ENCODE measurements at regions of chr9 and their contacts with region 1.

Region 1: DNA sequence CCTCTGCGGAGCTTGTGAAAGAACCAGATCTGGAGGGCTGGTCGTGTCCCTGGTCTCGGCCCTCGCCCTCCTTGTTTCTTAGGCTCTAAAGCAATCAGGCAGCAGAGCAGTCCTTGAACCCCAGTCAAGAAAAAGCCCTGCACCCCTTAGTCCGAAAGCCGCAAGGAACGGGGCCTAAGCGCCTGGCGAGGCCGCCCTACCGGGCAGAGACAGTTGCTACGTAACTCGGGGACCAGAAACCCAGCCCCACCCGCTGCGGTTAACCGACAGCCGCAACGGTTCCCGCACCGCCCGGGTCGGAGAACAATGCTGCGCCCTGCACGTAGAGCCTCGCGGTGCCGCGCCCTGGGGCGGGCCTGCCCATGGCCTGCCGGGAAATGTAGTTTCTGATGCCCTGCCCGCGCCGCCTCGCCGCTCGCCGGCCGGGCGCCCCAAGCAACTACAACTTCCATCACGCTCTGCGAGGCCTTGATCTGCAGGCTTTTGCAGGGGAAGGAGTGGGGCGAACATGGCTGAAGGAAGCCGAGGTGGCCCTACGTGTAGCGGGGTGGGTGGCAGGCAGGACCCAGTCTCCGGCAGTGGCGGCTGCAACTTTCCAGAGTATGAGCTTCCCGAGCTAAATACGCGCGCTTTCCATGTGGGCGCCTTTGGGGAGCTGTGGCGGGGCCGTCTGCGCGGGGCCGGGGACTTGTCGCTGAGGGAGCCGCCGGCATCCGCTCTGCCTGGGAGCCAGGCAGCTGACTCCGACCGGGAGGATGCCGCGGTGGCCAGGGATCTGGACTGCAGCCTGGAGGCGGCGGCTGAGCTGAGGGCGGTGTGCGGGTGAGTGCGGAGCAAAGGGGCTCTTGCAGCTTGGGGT is at the start of gene SNAPC3:
- DNase-seq: peak; percentile 94
- H3K4me3 Mint-ChIP-seq: peak within 1 kb of the TSS; percentile 89
- H3K27ac Mint-ChIP-seq: peak within 1 kb of the TSS; percentile 86
- H3K4me1 Mint-ChIP-seq: peaks cover 28% of the 10 kb centered on the region
- H3K27me3 Mint-ChIP-seq: no peaks in the 10 kb centered on the region
- total RNA-seq, gene SNAPC3: 30.6 to 32.8 TPM

Region 2: GRCh38 chr9:14993061-14993800 is 429.4 kb before region 1 on chr9:
- CTCF ChIA-PET with region 1: no interaction called
- intact Hi-C with region 1: loop called (anchors 2 kb)
- DNase-seq: peak; percentile 76
- H3K4me3 Mint-ChIP-seq: peak overlapping the region; percentile 76
- H3K27ac Mint-ChIP-seq: peak overlapping the region; percentile 74
- H3K4me1 Mint-ChIP-seq: peaks cover 30% of the 10 kb centered on the region
- H3K27me3 Mint-ChIP-seq: no peaks in the 10 kb centered on the region

Region 3: GRCh38 chr9:15231788-15232635 is 190.6 kb before region 1 on chr9:
- CTCF ChIA-PET with region 1: no interaction called
- intact Hi-C with region 1: loop called (anchors 1 kb)
- DNase-seq: peak; percentile 25
- H3K4me3 Mint-ChIP-seq: no peak overlapping the region
- H3K27ac Mint-ChIP-seq: no peak overlapping the region
- H3K4me1 Mint-ChIP-seq: peaks cover 47% of the 10 kb centered on the region
- H3K27me3 Mint-ChIP-seq: no peaks in the 10 kb centered on the region

Region 4: DNA sequence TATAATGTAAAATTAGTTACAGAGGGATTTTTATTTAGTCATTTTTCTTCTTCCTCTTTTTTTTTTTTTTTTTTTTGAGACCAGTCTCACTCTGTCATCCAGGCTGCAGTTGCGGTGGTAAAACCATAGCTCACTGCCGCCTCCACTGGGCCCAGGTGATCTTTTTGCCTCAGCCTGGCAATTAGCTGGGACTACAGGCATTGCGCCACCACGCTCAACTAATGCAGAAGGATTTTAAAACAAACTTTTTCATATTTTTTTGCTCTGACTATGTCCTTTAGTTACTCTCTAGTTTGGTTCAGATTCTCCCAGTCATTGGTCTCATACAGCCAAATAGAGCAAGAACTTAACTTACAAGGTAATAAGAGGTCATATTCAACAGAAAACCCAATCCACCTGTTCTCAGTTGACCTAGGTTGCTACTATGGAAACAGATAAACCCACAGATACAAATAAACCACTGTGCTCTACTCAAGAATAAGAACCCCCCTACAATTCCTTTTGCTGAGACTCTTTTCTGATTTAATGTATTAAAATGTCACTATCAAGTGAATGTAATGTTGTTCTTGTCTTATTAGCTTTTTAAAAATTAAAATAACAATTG is 65.4 kb before region 1 on chr9:
- CTCF ChIA-PET with region 1: interaction called, 4 read pairs
- intact Hi-C with region 1: loop called (anchors 1 kb)
- DNase-seq: peak; percentile 62
- H3K4me3 Mint-ChIP-seq: no peak overlapping the region
- H3K27ac Mint-ChIP-seq: no peak overlapping the region
- H3K4me1 Mint-ChIP-seq: peaks cover 9% of the 10 kb centered on the region
- H3K27me3 Mint-ChIP-seq: no peaks in the 10 kb centered on the region

Region 5: GRCh38 chr9:15510789-15511575 is 88.4 kb after region 1 on chr9 and contains the start of gene PSIP1:
- CTCF ChIA-PET with region 1: no interaction called
- intact Hi-C with region 1: loop called (anchors 1 kb)
- DNase-seq: peak; percentile 91
- H3K4me3 Mint-ChIP-seq: peak within 1 kb of the TSS; percentile 92
- H3K27ac Mint-ChIP-seq: peak within 1 kb of the TSS; percentile 98
- H3K4me1 Mint-ChIP-seq: peaks cover 51% of the 10 kb centered on the region
- H3K27me3 Mint-ChIP-seq: no peaks in the 10 kb centered on the region
- total RNA-seq, gene PSIP1: 161 to 164 TPM

Region 6: GRCh38 chr9:15606643-15607472 is 184.3 kb after region 1 on chr9:
- CTCF ChIA-PET with region 1: no interaction called
- intact Hi-C with region 1: loop called (anchors 2 kb)
- DNase-seq: no peak
- H3K4me3 Mint-ChIP-seq: no peak overlapping the region
- H3K27ac Mint-ChIP-seq: no peak overlapping the region
- H3K4me1 Mint-ChIP-seq: no peaks in the 10 kb centered on the region
- H3K27me3 Mint-ChIP-seq: no peaks in the 10 kb centered on the region

Measured in activated naive CD4-positive, alpha-beta T cell treated with anti-CD3 and anti-CD28 coated beads for 36 hours (primary cell).